ENCODE measurements at regions of chr10 and their contacts with region 1.

Region 1: DNA sequence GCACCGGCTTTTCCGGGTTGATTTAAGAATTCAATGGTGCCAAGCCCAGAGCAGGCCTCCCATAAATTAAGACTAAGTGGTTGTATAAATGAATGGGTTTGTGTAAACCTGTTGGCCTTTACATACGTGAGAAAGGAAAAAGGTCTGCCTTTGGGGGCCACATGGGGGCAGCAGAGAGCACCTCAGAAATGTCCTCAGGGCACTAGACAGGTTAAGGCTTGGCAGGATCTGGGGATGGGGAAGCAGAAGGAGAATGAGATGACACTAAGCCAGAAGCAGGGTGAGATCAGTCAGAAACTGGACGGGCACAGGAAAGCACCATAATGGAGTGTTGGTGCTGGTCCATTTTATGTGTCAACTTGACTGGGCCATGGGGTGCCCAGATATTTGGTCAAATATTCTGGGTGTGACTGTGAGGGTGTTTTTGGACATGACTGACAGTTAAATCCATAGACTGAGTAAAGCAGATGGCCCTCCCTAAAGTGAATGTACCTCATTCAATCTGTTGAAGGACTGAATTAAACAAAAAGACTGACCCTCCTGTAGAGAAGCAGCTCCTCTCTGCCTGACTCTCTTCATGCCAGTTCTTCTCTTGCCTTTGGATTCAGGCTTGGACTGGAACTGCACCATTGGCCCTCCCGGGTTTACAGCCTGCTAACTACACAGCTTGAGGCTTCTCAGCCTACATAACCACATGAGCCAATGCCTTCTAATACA is 58.9 kb downstream of the FRMPD2 start:
- H3K4me3 Mint-ChIP-seq: no peak overlapping the region
- H3K27ac Mint-ChIP-seq: no peak overlapping the region
- H3K4me1 Mint-ChIP-seq: no peaks in the 10 kb centered on the region
- H3K27me3 Mint-ChIP-seq: peaks cover 11% of the 10 kb centered on the region

Region 2: DNA sequence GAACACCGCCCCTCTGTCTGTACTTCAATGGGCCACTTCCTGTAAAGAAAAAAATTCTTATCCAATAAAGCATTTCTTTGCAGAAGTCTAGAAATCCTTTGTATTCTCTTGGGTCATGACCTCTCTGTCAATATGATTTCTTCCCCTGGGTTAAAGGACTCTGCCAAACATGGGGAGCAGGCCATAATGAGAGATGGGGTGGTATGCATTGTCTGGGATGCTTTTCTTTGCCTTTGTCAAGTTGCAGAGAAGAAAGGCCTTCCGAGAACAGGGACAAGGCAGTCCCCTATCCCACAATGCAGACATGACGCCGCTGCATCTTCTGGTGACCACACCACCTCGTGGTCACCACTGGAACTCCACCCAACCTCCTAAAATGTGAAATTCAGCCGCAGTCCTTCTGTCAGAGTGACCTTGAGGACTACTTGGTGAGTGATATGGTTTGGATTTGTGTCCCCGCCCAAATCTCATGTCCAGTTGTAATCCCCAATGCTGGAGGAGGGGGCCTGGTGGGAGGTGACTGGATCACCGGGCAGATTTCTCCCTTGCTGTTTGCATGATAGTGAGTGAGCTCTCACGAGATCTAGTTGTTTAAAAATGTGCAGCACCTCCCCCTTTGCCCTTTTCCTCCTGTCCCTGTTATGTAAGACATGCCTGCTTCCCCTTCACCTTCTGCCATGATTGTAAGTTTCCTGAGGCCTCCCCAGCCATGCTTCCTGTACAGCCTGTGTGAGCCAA is 74.0 kb after region 1 on chr10:
- intact Hi-C with region 1: loop called (anchors 5 kb)
- H3K4me3 Mint-ChIP-seq: no peak overlapping the region
- H3K27ac Mint-ChIP-seq: no peak overlapping the region
- H3K4me1 Mint-ChIP-seq: peaks cover 12% of the 10 kb centered on the region
- H3K27me3 Mint-ChIP-seq: peaks cover 11% of the 10 kb centered on the region